ENCODE measurements at regions of chr7 and their contacts with region 1.

Region 1: DNA sequence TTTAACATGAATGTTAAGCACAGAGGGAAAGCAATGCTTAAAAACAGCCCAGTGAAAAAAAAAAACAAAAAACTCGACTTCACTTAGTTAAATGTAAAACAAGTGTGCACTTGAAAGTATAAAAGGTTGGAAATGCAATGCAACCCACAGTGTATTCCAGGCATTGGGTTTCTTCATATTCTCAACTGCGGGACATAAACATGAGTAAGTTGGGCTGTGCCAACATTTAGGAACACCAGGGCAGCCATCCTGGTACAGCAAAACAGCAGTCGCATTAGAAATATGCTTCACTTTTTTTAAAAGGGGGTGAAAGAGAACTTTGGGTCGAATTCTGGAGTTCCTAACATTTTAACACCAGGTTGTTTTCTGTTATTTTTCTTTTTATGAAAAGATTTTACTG is 937 bp downstream of the STEAP1 start:
- DNase-seq: no peak
- ATAC-seq: no peak
- H3K4me3 ChIP-seq: peak overlapping the region in 1 of 2 experiments; percentile 37; a peak in 2 of 4 replicates
- H3K27ac ChIP-seq: no peak overlapping the region
- H3K4me1 ChIP-seq: no peaks in the 10 kb centered on the region
- H3K27me3 ChIP-seq: no peaks in the 10 kb centered on the region
- CTCF ChIP-seq: no peak

Region 2: DNA sequence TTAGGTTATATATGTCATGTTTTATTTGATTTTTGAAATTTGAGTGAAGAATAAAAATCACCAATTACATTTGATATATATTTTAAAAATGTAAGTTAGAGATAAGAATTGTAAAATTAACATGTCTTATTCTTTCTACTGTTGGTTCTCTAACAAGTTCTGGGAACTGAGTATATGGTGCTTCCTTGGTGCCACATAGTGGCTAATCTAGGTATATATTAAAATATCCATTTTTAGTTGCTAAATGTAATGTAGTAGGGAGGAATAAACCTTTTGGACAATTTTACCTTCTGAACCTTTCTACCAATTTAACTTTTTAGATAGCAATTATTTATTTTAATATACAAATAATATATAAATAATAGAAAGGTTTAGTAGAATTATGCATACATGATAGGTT is 107.2 kb after region 1 on chr7:
- CTCF ChIA-PET with region 1: no interaction called
- POLR2A ChIA-PET with region 1: no interaction called
- in situ Hi-C with region 1: no loop called
- intact Hi-C with region 1: loop called (anchors 2 kb)
- DNase-seq: peak; percentile 17
- ATAC-seq: peak; percentile 72; the same call in 1 of the 2 replicates
- H3K4me3 ChIP-seq: no peak overlapping the region
- H3K27ac ChIP-seq: no peak overlapping the region
- H3K4me1 ChIP-seq: no peaks in the 10 kb centered on the region
- H3K27me3 ChIP-seq: peaks cover 3% of the 10 kb centered on the region; the same call in 1 of the 2 replicates
- CTCF ChIP-seq: no peak

Region 3: GRCh38 chr7:90788052-90788451 is 632.8 kb after region 1 on chr7:
- CTCF ChIA-PET with region 1: no interaction called
- POLR2A ChIA-PET with region 1: no interaction called
- in situ Hi-C with region 1: no loop called
- intact Hi-C with region 1: no loop called
- DNase-seq: no peak
- ATAC-seq: no peak
- H3K4me3 ChIP-seq: no peak overlapping the region
- H3K27ac ChIP-seq: no peak overlapping the region
- H3K4me1 ChIP-seq: no peaks in the 10 kb centered on the region
- H3K27me3 ChIP-seq: no peaks in the 10 kb centered on the region
- CTCF ChIP-seq: no peak

Measured in Panc1 (cell line).